Left lung (tissue), 14 donors: ENCODE measurements at regions of chr2 and their contacts with region 1.

Region 1: GRCh38 chr2:113876503-113877387 is 13.1 kb upstream of the ACTR3 start:
- DNase-seq: peak in 1 of 4 donors; percentile 30
- ATAC-seq: peak; percentile 64
- H3K4me3 ChIP-seq: no peak overlapping the region
- H3K27ac ChIP-seq: no peak overlapping the region
- H3K4me1 ChIP-seq: peaks cover 6 to 16% of the 10 kb centered on the region in 2 donors
- H3K27me3 ChIP-seq: no peaks in the 10 kb centered on the region
- CTCF ChIP-seq: no peak

Region 2: GRCh38 chr2:113724010-113724409 is 152.7 kb before region 1 on chr2:
- intact Hi-C with region 1: no loop called
- DNase-seq: no peak
- ATAC-seq: no peak
- H3K4me3 ChIP-seq: no peak overlapping the region
- H3K27ac ChIP-seq: no peak overlapping the region
- H3K4me1 ChIP-seq: no peaks in the 10 kb centered on the region
- H3K27me3 ChIP-seq: no peaks in the 10 kb centered on the region
- CTCF ChIP-seq: no peak

Region 3: GRCh38 chr2:113762377-113763118 is 114.2 kb before region 1 on chr2:
- intact Hi-C with region 1: loop called in 1 of 2 experiments (anchors 10 kb)
- DNase-seq: no peak
- ATAC-seq: no peak
- H3K4me3 ChIP-seq: no peak overlapping the region
- H3K27ac ChIP-seq: no peak overlapping the region
- H3K4me1 ChIP-seq: peaks cover 2 to 3% of the 10 kb centered on the region in 2 donors
- H3K27me3 ChIP-seq: no peaks in the 10 kb centered on the region
- CTCF ChIP-seq: no peak

Region 4: GRCh38 chr2:113965644-113966043 is 88.9 kb after region 1 on chr2:
- intact Hi-C with region 1: no loop called
- DNase-seq: peak in 1 of 4 donors; percentile 21
- ATAC-seq: peak; percentile 73
- H3K4me3 ChIP-seq: no peak overlapping the region
- H3K27ac ChIP-seq: peak overlapping the region in 1 of 2 donors; percentile 64
- H3K4me1 ChIP-seq: peaks cover 6 to 38% of the 10 kb centered on the region in 2 donors
- H3K27me3 ChIP-seq: no peaks in the 10 kb centered on the region
- CTCF ChIP-seq: peak in 1 of 2 donors; percentile 17

Region 5: GRCh38 chr2:114170070-114170469 is 293.3 kb after region 1 on chr2:
- intact Hi-C with region 1: no loop called
- DNase-seq: no peak
- ATAC-seq: no peak
- H3K4me3 ChIP-seq: no peak overlapping the region
- H3K27ac ChIP-seq: no peak overlapping the region
- H3K4me1 ChIP-seq: no peaks in the 10 kb centered on the region
- H3K27me3 ChIP-seq: no peaks in the 10 kb centered on the region
- CTCF ChIP-seq: no peak